Activated CD4-positive, alpha-beta memory T cell treated with anti-CD3 and anti-CD28 coated beads, Interleukin-2, amount 10 ng/mL, durations not matched to agents 7 days and 5 days (primary cell): ENCODE measurements at regions of chr3 and their contacts with region 1.

Region 1: GRCh38 chr3:73502609-73503583 is 121.8 kb downstream of the PDZRN3 start:
- DNase-seq: peak; percentile 47
- H3K4me3 Mint-ChIP-seq: no peak overlapping the region
- H3K27ac Mint-ChIP-seq: no peak overlapping the region
- H3K4me1 Mint-ChIP-seq: no peaks in the 10 kb centered on the region
- H3K27me3 Mint-ChIP-seq: peaks cover 5% of the 10 kb centered on the region

Region 2: DNA sequence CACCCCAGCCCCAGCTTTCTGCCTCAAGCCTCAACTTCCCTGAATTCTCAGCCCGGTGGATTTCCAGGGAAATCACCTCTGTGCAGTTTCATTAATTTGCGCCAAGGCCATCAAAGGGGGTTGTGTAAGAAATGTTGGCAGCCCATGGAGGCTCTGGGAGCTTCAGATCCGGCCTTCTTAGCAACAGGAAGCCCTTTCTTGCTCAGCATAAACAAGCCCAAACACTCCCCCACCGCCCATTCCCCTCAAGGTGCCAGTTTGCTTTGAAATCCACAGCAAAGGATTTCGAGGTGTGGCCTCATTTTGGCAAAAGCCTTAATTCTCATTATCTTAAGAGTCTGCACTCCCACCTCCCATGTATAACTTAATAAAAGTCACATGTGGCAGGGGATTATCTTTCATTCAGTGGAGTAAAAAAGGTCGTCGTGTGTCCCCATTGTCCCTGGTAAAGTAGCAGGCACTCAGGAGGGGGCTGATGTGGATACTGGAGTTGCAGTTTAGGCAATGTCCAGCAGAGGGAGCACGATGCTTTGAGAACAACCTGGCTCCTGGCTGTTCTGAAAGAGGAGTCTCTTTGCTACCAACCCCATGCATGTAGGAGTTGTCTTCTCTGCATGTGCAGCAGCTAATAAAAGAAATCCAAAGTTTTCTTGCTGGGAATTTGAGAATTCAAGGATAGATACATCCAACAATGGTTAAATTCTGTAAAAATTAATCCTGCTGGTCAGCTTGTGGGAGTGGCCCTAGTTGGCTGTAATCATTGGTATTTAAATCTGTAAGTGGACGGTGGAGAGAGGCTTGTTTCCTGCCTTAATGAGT is 401.9 kb before region 1 on chr3:
- CTCF ChIA-PET with region 1: interaction called, 15 read pairs
- POLR2A ChIA-PET with region 1: no interaction called
- DNase-seq: peak; percentile 76
- H3K4me3 Mint-ChIP-seq: no peak overlapping the region
- H3K27ac Mint-ChIP-seq: no peak overlapping the region
- H3K4me1 Mint-ChIP-seq: peaks cover 1% of the 10 kb centered on the region
- H3K27me3 Mint-ChIP-seq: peaks cover 2% of the 10 kb centered on the region